Activated CD4-positive, alpha-beta T cell treated with anti-CD3 and anti-CD28 coated beads, Interleukin-2, amount 10 ng/mL, durations not matched to agents 7 days and 5 days (primary cell): ENCODE measurements at regions of chr15 and their contacts with region 1.

Region 1: GRCh38 chr15:43150191-43150929 is 17.0 kb downstream of the TMEM62 start:
- DNase-seq: no peak
- H3K4me3 Mint-ChIP-seq: no peak overlapping the region
- H3K27ac Mint-ChIP-seq: no peak overlapping the region
- H3K4me1 Mint-ChIP-seq: peaks cover 24% of the 10 kb centered on the region
- H3K27me3 Mint-ChIP-seq: no peaks in the 10 kb centered on the region

Region 2: DNA sequence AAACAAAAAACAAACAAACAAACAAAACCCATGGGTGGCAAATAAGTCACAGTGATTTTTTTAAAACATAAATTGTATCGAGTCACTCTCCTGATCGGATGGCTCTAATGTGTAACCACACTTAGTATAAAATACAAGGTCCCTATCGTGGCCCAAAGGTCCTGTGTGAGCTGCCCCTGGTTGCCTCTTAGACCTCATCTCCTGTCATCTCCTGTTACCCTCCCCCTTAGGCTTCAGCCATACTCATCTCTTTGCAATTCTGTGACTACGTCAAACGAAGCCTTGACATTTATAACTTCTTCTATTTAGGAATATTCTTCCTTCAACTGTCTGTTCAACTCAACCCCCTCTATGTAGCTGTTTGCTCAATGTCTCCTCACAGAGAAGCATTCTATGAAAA is 185.9 kb before region 1 on chr15:
- CTCF ChIA-PET with region 1: no interaction called
- POLR2A ChIA-PET with region 1: interaction called, 13 read pairs
- DNase-seq: no peak
- H3K4me3 Mint-ChIP-seq: no peak overlapping the region
- H3K27ac Mint-ChIP-seq: no peak overlapping the region
- H3K4me1 Mint-ChIP-seq: no peaks in the 10 kb centered on the region
- H3K27me3 Mint-ChIP-seq: no peaks in the 10 kb centered on the region

Region 3: DNA sequence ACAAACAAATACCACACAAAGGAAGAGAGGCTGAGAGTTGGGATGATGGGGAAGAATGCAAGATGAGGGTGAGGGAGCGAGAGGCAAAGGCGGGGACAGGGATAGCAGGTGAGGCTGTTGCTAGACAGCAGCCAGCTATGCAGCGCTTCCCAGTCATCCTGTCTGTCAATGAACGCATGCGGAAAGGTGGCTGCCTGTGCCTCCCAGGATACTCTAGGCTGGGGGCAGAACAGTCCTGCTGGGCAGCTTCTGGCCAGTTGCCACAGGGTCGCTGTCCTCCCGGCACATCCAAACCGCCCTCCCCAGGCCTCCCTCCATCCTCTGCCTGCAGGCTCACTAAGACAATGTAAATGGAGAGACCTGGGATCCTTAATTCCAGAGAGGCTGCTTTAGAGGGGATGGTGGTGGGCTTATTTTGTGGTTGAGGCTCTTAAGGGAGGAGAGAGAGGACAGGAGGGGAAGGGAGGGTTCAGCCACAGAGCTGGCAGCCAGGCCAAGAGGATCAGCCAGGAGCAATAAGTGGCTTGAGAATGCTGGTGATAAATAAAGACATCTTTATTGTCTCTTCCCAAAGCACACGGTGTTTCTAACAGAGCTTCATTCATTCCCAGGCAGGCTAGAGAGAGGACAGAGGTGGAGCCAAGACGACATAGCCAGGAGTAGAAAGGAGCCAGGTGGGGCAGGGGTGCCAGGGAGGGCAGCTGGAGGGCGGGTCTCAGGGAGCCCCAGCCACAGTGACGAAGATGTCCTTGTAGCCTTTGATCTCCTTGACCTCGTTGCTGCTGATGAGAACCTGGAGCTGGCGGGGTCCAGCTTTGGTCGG is 125.6 kb after region 1 on chr15:
- CTCF ChIA-PET with region 1: no interaction called
- POLR2A ChIA-PET with region 1: no interaction called
- DNase-seq: no peak
- H3K4me3 Mint-ChIP-seq: no peak overlapping the region
- H3K27ac Mint-ChIP-seq: no peak overlapping the region
- H3K4me1 Mint-ChIP-seq: peaks cover 4% of the 10 kb centered on the region
- H3K27me3 Mint-ChIP-seq: peaks cover 8% of the 10 kb centered on the region